Sigmoid colon (tissue), 7 donors: ENCODE measurements at regions of chr13 and their contacts with region 1.

Region 1: DNA sequence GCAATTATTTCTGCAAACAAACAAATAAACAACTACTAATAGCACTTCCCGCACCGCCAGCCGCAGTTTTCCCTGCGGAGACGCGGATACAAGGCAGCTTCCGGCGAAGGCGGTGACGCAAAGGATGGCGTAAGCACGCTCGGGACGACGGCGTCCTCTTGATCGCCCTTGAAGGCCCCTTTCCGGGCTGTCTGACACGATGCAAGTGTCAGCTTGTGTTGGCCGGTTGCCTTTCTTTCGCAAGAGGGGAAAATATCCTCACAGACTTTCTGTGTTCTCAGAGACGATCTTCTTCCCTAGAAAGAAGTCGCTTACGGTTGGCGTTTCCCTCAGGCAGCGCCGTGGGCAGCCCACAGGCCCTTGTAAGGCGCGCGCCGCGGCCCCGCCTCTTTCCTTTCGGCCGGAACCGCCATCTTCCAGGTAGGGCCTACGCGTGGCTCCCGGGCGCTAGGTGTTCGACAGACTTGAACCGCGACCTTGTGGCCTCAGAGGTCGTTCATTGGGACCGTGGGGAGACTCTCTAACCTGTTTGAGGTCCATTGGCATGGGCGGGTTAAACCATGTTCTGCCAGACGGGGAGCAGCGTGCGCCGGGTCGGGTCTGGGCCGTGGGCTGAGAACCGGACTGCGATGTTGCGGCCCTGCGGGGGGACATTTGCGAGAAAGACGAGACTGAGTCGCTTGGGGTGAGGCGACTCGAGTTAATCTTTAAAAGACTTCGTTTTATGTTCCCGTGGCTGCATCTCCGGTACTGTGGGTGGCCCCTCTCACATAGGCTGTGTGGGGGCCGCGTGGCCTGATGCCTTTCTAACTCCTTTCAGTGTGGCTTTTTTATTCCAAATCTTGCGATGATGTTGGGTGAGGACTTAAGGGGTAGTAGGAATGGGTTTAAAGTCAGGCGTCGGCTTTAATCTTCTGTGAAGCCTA is at the start of gene RPL21:
- DNase-seq: peak; percentile 98
- H3K4me3 ChIP-seq: peak within 1 kb of the TSS; percentile 62 to 86 (median 68)
- H3K27ac ChIP-seq: peak within 1 kb of the TSS; percentile 88 to 96 (median 92)
- H3K4me1 ChIP-seq: peaks cover 0 to 44% (median 36%) of the 10 kb centered on the region in 4 donors
- H3K27me3 ChIP-seq: no peaks in the 10 kb centered on the region
- CTCF ChIP-seq: no peak
- EP300 ChIP-seq: peak in 3 of 4 donors; percentile 25 to 87 (median 86)
- POLR2A ChIP-seq: peak; percentile 84 to 91
- total RNA-seq, gene RPL21: 708 to 2,145 (median 1,875) TPM

Region 2: GRCh38 chr13:27171827-27172494 is 79.5 kb before region 1 on chr13:
- intact Hi-C with region 1: loop called (anchors 1 kb)
- DNase-seq: peak; percentile 96
- H3K4me3 ChIP-seq: peak overlapping the region; percentile 71 to 95 (median 92)
- H3K27ac ChIP-seq: peak overlapping the region; percentile 96 to 99 (median 98)
- H3K4me1 ChIP-seq: peaks cover 0 to 43% (median 39%) of the 10 kb centered on the region in 4 donors
- H3K27me3 ChIP-seq: no peaks in the 10 kb centered on the region
- CTCF ChIP-seq: no peak
- EP300 ChIP-seq: no peak
- POLR2A ChIP-seq: no peak

Region 3: DNA sequence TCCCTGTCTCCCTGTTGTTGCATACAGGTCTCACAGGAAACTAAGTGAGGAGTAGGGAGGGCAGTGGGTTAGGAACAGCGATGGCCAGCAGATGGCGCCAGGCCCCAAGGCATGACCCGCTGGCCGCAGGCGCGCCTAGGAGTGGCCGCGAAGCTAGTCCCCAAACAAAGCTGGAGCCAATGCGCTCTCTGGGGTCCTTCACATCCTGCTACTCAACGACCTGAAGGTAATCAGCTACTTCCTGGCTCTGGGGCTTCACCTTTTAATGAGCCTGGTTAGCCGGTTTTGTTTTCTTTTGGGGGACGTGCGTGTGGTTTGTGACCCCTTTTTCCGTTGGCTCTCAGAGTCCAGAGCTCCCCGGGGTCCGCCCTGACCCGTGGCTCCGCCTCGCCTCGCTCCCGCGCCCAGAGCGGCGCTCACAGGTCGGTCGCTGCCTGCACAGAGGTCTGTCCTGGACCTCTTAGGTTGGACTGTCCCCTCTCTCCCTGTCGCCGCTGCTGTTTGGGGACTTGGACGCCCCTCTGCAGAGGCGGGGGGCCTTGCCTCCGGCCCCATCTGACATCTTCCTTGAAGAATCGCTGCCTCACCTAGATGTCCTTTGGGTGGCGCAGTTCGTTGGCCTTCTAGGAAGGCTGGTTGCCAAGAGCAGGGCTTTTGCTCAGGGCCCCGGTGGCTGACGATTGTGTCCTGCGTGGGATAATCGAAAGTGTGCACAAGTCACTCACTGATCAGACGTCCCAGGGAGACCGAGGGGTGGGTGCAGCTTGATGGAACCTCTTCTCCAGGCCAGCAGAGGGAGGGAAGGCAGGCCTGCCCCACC is 110.8 kb after region 1 on chr13:
- intact Hi-C with region 1: loop called (anchors 5 kb)
- DNase-seq: peak; percentile 91
- H3K4me3 ChIP-seq: peak overlapping the region; percentile 18 to 54 (median 46)
- H3K27ac ChIP-seq: peak overlapping the region in 1 of 4 donors; percentile 37
- H3K4me1 ChIP-seq: peaks cover 0 to 17% (median 12%) of the 10 kb centered on the region in 4 donors
- H3K27me3 ChIP-seq: peaks cover 0 to 7% (median 0%) of the 10 kb centered on the region in 3 donors
- CTCF ChIP-seq: peak; percentile 75 to 91 (median 84)
- EP300 ChIP-seq: no peak
- POLR2A ChIP-seq: no peak

Region 4: DNA sequence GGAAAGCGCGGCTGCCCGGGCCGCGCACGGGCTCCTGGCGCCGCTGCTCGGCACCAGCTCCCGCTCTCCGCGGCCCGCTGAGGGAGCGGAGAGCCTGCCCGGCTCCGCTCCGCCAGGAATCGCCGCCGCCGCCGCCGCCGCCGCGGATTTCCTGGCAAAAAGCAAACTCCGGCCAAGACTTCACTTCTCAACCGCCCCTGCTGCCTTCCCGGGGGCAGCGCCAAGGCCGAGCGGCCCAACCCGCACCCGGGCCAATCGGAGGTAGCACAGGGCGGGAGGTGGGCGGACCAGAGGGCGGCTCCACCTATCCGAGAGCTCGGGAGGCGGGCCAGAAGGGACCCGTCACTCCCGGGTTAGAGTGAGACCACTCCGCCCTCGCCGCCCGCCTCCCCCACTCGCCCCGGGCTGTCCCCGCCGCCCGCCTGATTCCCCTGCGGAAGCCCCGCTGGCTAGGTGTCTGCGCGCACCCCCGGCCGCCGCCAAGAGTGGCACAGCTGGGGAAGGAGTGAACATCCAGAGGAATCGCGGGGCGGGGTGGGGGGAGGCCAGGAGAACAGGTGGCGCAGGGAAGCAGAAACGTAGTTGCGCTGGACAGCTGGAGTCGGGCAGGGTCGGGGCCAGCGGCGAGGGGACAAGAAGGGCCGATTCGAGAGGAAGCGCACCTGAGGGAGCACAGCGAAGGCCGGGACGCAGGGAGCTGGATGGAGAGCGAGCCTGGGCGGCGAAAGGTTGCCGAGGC is 369.1 kb after region 1 on chr13 and contains the start of gene LNX2:
- intact Hi-C with region 1: loop called (anchors 10 kb)
- DNase-seq: peak; percentile 99
- H3K4me3 ChIP-seq: peak within 1 kb of the TSS; percentile 85 to 95 (median 92)
- H3K27ac ChIP-seq: peak within 1 kb of the TSS; percentile 91 to 98 (median 96)
- H3K4me1 ChIP-seq: peaks cover 0 to 38% (median 27%) of the 10 kb centered on the region in 4 donors
- H3K27me3 ChIP-seq: no peaks in the 10 kb centered on the region
- CTCF ChIP-seq: no peak
- EP300 ChIP-seq: no peak
- POLR2A ChIP-seq: peak; percentile 63 to 77
- total RNA-seq, gene LNX2: 7.7 to 13.9 (median 10.6) TPM